ENCODE measurements at regions of chr17 and their contacts with region 1.

Region 1: DNA sequence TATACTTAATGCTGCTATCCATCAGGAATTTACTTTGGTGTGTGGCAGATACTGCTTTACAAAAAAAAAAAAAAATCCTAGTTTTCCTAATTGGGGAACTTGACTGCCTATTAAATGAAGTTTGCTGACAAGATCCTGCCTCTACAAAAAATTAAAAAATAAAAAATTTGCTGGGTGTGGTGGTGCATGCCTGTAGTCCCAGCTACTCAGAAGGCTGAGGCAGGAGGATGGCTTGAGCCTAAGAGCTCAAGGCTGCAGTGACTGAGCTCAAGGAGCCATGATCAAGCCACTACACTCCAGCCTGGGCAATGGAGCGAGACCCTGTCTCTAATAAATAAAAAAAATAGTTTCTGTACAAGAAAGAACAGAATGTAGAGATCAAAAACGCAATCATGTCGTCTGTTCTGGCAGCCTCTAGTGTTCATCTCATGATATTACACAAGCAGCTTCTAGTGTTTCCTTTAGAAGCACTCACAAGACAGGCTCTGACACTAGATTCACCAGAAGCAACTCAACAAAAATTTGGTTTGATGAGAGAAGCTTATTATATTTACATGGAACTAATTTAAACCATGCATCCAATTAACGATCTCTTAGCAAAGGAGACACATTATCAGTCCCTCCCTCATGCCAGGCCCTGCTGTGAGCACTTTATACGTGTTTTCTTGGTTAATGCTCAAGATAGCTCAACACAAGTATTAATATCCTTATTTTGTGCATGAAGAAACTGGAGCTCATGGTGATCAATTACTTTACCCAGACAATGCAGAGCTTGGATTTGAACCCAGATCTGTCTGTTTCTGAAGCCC is 6.8 kb upstream of the KRTAP17-1 start:
- DNase-seq: no peak
- ATAC-seq: peak in 1 of 4 donors; percentile 41
- H3K4me3 ChIP-seq: no peak overlapping the region
- H3K27ac ChIP-seq: no peak overlapping the region
- H3K4me1 ChIP-seq: no peaks in the 10 kb centered on the region
- H3K27me3 ChIP-seq: no peaks in the 10 kb centered on the region
- CTCF ChIP-seq: peak; percentile 35 to 73 (median 59)
- POLR2A ChIP-seq: no peak

Region 2: GRCh38 chr17:40803617-40804082 is 518.6 kb before region 1 on chr17:
- intact Hi-C with region 1: loop called in 2 of 10 experiments (anchors 1 to 10 kb)
- DNase-seq: peak; percentile 65 to 78 (median 70)
- ATAC-seq: peak; percentile 61 to 90 (median 86)
- H3K4me3 ChIP-seq: no peak overlapping the region
- H3K27ac ChIP-seq: no peak overlapping the region
- H3K4me1 ChIP-seq: peaks cover 0 to 6% (median 1%) of the 10 kb centered on the region in 12 donors
- H3K27me3 ChIP-seq: peaks cover 0 to 37% (median 8%) of the 10 kb centered on the region in 9 donors
- CTCF ChIP-seq: peak; percentile 72 to 92 (median 83)
- POLR2A ChIP-seq: no peak